A673 (cell line): ENCODE measurements at regions of chr5 and their contacts with region 1.

Region 1: DNA sequence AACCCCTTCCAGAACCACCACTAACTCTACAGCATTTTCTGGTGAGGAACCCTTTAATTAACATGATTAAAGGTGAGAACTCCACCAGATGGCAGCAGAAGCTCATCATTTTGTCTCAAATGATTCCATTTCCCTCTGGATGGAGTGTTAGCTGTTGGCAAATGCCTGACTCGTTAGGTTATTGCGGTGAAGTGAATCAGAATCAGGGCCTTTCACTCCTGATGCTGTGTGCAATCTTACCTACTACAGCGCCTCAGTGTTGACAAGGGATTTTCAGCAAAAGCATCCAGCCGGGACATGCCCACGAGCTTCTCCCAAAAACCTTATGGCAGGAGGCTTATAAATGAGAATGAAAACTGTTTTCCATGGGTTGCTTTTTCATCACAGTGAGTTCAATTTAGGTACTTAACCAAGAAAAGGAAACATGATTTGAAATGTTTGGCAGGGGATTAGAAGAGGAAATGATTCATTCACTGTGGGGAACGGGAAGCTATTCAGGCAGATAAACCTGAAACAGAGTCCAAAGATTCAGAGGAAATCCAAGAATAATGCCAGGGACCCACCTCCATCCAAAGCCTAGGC is 48.0 kb upstream of the CAST start:
- DNase-seq: peak; percentile 92
- H3K4me3 ChIP-seq: peak overlapping the region; percentile 13
- H3K27ac ChIP-seq: peak overlapping the region; percentile 55
- H3K4me1 ChIP-seq: peaks cover 36% of the 10 kb centered on the region
- H3K27me3 ChIP-seq: no peaks in the 10 kb centered on the region
- CTCF ChIP-seq: peak; percentile 65

Region 2: DNA sequence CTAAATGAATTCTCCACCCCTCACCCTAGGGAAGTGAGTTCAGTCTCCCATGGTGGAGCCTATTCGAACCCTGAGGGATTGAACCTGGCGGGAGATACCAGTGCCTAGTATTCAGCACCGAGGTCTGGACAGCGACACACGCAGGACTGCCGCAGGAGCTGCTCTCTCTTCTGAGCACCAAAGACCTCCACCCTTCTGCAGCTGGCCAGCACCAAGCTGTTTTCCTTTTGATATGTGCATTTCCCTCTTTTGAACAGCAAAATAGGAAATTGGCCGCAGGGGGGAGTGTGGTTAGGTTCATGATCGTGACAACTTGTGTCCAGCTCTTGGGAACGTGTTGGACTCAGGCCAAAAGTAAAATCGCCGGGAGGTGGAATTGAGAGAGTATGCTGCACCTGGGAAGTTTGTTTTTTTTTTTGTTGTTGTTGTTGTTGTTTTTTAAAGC is 180.0 kb before region 1 on chr5:
- CTCF ChIA-PET with region 1: no interaction called
- POLR2A ChIA-PET with region 1: no interaction called
- intact Hi-C with region 1: loop called (anchors 5 kb)
- DNase-seq: peak; percentile 89
- H3K4me3 ChIP-seq: no peak overlapping the region
- H3K27ac ChIP-seq: no peak overlapping the region
- H3K4me1 ChIP-seq: peaks cover 12% of the 10 kb centered on the region
- H3K27me3 ChIP-seq: peaks cover 18% of the 10 kb centered on the region
- CTCF ChIP-seq: 0 out of 2 replicates have a peak, but pooled peaks have one; percentile 18

Region 3: DNA sequence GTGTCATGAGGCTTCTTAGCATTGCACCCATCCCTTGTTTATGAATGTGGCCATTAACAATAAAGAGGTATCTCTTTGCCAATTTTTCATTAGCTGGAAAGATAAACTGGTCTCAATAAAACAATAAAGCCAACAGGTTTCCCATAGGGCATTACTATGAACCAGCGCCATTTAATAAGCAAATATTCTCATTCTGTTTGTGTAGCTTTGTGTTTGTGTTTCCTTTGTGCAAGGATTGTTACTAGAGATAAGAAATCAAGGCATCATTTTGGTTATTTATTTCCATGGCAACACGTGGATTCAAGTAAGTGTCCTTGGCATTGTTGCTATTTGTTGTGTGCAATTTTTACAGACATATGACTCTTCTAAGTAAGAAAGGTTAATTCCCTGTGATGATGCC is 10.4 kb after region 1 on chr5:
- CTCF ChIA-PET with region 1: no interaction called
- POLR2A ChIA-PET with region 1: no interaction called
- intact Hi-C with region 1: no loop called
- DNase-seq: no peak
- H3K4me3 ChIP-seq: no peak overlapping the region
- H3K27ac ChIP-seq: no peak overlapping the region
- H3K4me1 ChIP-seq: peaks cover 17% of the 10 kb centered on the region
- H3K27me3 ChIP-seq: no peaks in the 10 kb centered on the region
- CTCF ChIP-seq: no peak

Region 4: DNA sequence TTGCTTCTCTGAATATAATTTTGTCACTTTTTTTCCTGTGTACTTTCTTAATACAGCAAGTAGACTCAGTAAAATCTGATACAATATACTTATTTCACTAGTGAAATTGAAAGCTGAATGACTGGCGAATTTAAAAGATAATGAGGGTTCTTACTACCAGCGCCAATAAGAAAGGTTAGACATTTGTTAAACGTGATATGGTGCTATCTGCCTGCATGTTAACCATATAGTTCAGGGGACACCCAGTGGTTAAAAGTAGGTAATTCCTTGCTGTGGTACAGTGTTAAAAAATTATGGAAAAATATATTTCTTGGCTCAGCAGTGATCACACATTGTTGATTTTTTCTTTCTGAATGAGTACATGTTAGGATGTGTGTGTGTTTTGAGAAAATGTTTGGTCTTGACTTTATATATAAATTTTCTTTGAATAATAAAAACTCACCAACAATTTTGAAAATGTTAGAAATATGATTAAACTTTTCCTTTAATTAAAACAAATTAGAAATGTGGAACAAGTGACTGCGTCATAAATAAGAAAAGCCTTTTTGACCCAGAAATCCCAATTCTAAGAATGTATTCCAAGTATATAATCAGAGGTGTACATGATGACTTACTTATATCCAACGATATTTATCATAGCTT is 73.7 kb after region 1 on chr5:
- CTCF ChIA-PET with region 1: interaction called, 9 read pairs
- POLR2A ChIA-PET with region 1: no interaction called
- intact Hi-C with region 1: loop called (anchors 1 kb)
- DNase-seq: peak; percentile 76
- H3K4me3 ChIP-seq: peak overlapping the region; percentile 21
- H3K27ac ChIP-seq: no peak overlapping the region
- H3K4me1 ChIP-seq: no peaks in the 10 kb centered on the region
- H3K27me3 ChIP-seq: no peaks in the 10 kb centered on the region
- CTCF ChIP-seq: peak; percentile 76

Region 5: GRCh38 chr5:96729156-96729555 is 115.0 kb after region 1 on chr5:
- CTCF ChIA-PET with region 1: interaction called, 8 read pairs
- POLR2A ChIA-PET with region 1: no interaction called
- intact Hi-C with region 1: loop called (anchors 5 kb)
- DNase-seq: no peak
- H3K4me3 ChIP-seq: no peak overlapping the region
- H3K27ac ChIP-seq: no peak overlapping the region
- H3K4me1 ChIP-seq: no peaks in the 10 kb centered on the region
- H3K27me3 ChIP-seq: no peaks in the 10 kb centered on the region
- CTCF ChIP-seq: peak; percentile 59

Region 6: DNA sequence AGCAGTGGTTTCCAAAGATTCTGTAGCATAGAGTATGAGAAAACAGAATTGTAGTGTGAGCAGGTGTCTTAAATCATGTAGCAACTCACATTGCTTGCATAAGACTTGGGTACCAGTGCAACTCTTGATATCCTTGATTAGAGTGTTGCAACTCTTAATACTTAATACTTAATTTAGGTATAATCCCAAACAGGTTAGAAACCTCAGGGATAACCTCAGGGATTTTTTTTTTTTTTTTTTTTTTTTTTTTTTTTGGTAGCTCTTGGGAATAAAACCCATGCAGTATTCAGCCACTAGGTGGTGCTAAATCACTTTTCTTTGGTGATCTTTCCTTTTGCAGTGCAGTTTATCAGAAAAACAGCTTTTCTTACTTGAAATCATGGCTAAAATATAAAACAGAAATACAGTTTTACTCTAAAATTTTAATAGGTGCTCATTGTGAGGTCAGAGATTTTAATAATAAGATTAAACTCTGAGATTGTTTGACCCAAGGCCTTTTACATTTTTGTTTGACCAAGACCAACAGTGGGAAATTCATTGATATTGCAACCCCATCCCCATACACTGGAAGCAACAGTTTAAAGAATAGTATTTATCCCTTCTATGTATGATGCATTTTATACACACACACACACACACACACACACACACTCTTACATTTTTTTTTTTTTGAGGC is 138.3 kb after region 1 on chr5:
- CTCF ChIA-PET with region 1: interaction called, 21 read pairs
- POLR2A ChIA-PET with region 1: no interaction called
- intact Hi-C with region 1: loop called (anchors 5 kb)
- DNase-seq: peak; percentile 76
- H3K4me3 ChIP-seq: no peak overlapping the region
- H3K27ac ChIP-seq: no peak overlapping the region
- H3K4me1 ChIP-seq: no peaks in the 10 kb centered on the region
- H3K27me3 ChIP-seq: no peaks in the 10 kb centered on the region
- CTCF ChIP-seq: peak; percentile 82

Region 7: DNA sequence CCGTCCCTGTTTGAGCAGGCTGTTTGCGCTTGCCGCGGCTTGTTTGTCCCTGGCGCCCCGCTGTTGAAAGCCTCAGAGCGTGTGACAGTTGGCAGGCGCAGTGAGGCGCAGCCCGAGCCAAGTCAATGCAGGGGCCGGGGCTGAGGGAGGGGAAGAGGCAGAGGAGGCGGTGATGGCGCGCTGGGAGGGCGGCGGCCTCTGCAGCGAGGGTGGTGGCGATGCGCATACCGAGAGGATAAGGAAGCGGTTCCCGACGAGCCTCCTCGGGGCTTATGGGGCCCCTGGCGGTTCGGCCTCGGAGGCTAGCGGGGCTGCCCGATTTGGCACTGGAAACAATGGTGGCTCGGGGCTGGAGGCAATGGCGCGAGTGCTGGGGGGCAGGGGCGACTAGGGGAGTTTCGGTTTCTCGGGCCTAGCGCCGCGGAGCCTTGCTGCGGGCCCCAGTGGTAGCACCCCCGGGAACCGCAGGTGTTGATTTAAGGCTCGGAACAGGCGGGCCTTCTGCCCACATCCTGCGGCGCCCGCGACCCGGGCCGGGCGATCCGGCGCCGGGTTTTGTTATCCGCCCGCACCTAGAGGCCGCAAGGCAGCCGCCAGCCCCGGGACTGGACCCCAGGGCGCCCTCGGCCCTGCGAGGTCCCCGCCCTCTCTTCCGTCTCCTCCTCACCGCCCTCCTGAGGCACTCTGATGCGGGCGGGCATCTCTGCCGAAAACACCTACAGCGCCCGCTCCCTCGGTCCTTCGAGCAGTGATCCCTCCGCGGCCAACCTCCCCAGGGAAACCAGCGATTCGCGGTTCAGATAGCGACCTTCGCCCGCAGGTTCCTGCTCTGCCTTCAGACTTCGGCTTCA is 320.7 kb after region 1 on chr5:
- CTCF ChIA-PET with region 1: no interaction called
- POLR2A ChIA-PET with region 1: interaction called, 13 read pairs
- intact Hi-C with region 1: no loop called
- DNase-seq: peak; percentile 93
- H3K4me3 ChIP-seq: peak overlapping the region; percentile 80
- H3K27ac ChIP-seq: peak overlapping the region; percentile 91
- H3K4me1 ChIP-seq: peaks cover 32% of the 10 kb centered on the region
- H3K27me3 ChIP-seq: no peaks in the 10 kb centered on the region
- CTCF ChIP-seq: no peak

Region 8: DNA sequence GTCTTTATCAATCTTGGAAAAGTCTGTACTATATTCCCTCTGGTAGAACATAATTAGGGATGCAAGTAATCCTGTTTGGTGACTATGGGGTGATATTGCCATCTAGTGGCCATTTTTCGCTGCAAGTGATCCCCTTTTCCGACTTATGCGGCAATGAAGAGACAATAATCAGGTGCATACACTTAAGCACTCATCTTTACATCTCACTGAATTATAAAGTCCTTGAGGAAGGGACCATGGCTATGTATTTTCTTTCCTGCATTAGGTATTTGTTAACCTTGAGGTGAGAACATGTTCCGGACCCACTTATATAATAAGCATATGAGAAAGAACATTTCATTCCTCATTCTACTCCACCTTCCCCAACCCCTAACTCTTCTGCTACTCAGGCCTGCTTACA is 547.8 kb after region 1 on chr5:
- CTCF ChIA-PET with region 1: no interaction called
- POLR2A ChIA-PET with region 1: no interaction called
- intact Hi-C with region 1: loop called (anchors 2 kb)
- DNase-seq: peak; percentile 82
- H3K4me3 ChIP-seq: no peak overlapping the region
- H3K27ac ChIP-seq: no peak overlapping the region
- H3K4me1 ChIP-seq: no peaks in the 10 kb centered on the region
- H3K27me3 ChIP-seq: no peaks in the 10 kb centered on the region
- CTCF ChIP-seq: peak; percentile 86

Region 9: GRCh38 chr5:97250113-97250512 is 635.9 kb after region 1 on chr5:
- CTCF ChIA-PET with region 1: no interaction called
- POLR2A ChIA-PET with region 1: no interaction called
- intact Hi-C with region 1: no loop called
- DNase-seq: no peak
- H3K4me3 ChIP-seq: no peak overlapping the region
- H3K27ac ChIP-seq: no peak overlapping the region
- H3K4me1 ChIP-seq: no peaks in the 10 kb centered on the region
- H3K27me3 ChIP-seq: no peaks in the 10 kb centered on the region
- CTCF ChIP-seq: no peak